HepG2 (cell line): ENCODE measurements at regions of chr4 and their contacts with region 1.

Region 1: GRCh38 chr4:164768516-164768915 is 14.6 kb downstream of the SMIM31 start:
- DNase-seq: no peak
- ATAC-seq: peak; percentile 59; the same call in 2 of the 3 replicates
- H3K4me3 ChIP-seq: no peak overlapping the region
- H3K27ac ChIP-seq: no peak overlapping the region
- H3K4me1 ChIP-seq: no peaks in the 10 kb centered on the region
- H3K27me3 ChIP-seq: peaks cover 0 to 5% of the 10 kb centered on the region in 2 experiments; a peak in 1 of 5 replicates
- CTCF ChIP-seq: no peak
- EP300 ChIP-seq: no peak
- POLR2A ChIP-seq: no peak
- RAD21 ChIP-seq: no peak

Region 2: DNA sequence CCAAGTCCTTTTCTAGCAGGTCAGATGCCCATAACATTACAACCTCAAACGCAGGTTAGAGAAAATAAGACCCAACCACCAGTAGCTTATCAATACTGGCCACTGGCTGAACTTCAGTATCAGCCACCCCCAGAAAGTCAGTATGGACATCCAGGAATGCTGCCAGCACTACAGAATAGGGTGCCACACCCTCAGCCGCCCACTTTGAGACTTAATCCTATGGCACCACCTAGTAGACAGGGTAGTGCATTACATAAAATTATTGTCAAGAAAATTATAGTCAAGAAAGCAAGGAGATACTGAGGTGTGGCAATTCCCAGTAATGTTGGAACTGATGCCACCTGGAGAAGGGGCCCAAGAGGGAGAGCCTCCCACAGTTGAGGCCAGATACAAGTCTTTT is 228.8 kb after region 1 on chr4:
- CTCF ChIA-PET with region 1: no interaction called
- POLR2A ChIA-PET with region 1: no interaction called
- in situ Hi-C with region 1: no loop called
- intact Hi-C with region 1: loop called (anchors 1 kb)
- DNase-seq: peak; percentile 16
- ATAC-seq: no peak
- H3K4me3 ChIP-seq: no peak overlapping the region
- H3K27ac ChIP-seq: no peak overlapping the region
- H3K4me1 ChIP-seq: no peaks in the 10 kb centered on the region
- H3K27me3 ChIP-seq: peaks cover 1 to 4% of the 10 kb centered on the region in 2 experiments; a peak in 3 of 5 replicates
- CTCF ChIP-seq: peak; percentile 43; the same call in 1 of the 2 replicates
- EP300 ChIP-seq: no peak
- POLR2A ChIP-seq: no peak
- RAD21 ChIP-seq: no peak